ENCODE measurements at regions of chr6 and their contacts with region 1.

Region 1: GRCh38 chr6:72440611-72441010 is 181.3 kb upstream of the KCNQ5 start:
- DNase-seq: no peak
- CTCF ChIP-seq: no peak

Region 2: GRCh38 chr6:72425003-72425681 is 15.5 kb before region 1 on chr6:
- CTCF ChIA-PET with region 1: interaction called, 21 read pairs
- POLR2A ChIA-PET with region 1: no interaction called
- DNase-seq: no peak
- CTCF ChIP-seq: no peak

Measured in GM10248 (cell line).